Astrocyte of the cerebellum (primary cell): ENCODE measurements at regions of chr16 and their contacts with region 1.

Region 1: GRCh38 chr16:65837464-65837863 is 529.0 kb upstream of the CDH5 start:
- DNase-seq: no peak
- H3K4me3 ChIP-seq: no peak overlapping the region
- CTCF ChIP-seq: no peak

Region 2: DNA sequence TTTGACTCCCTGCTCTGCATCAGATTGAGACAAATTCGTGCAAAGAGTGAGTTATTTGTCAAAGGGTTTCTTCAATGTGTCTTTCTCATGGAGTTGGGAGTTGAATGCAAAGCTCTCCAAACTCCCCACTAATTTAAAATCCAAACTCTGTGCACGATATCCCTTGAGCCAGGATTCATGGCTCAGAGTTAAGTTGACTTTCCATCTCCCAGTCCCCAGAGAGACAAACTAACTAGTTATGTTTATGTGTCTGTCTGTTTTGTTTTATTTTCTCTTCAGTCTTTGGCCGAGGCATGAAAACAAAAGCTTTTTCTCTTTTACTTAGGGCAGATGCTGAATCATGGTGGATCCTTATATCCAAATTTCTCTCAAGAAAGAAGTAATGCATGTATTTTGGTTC is 41.0 kb before region 1 on chr16:
- in situ Hi-C with region 1: loop called (anchors 5 kb)
- DNase-seq: no peak
- H3K4me3 ChIP-seq: no peak overlapping the region
- CTCF ChIP-seq: no peak

Region 3: DNA sequence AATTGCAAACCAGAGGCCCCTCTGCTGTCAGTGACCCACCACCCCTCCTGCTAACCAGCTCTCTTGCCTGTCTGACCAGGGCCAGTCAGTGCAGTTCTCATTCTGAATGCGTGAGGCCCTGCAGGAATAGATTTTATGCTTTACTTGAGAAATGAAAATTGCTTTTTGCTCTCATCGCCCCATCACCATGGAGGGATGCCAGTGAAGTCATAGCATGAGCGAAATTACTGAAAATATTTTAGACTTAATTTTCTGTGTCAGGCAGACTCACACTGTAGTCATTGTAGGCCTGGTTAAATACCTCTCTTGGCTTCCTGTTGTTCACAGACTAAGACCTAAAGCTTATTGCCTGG is 38.6 kb after region 1 on chr16:
- in situ Hi-C with region 1: no loop called
- DNase-seq: no peak
- H3K4me3 ChIP-seq: no peak overlapping the region
- CTCF ChIP-seq: no peak

Region 4: GRCh38 chr16:66070140-66070917 is 232.9 kb after region 1 on chr16:
- in situ Hi-C with region 1: no loop called
- DNase-seq: no peak
- H3K4me3 ChIP-seq: no peak overlapping the region
- CTCF ChIP-seq: no peak